IMR-90 (cell line): ENCODE measurements at regions of chr12 and their contacts with region 1.

Region 1: GRCh38 chr12:10673660-10674384 is at the start of gene STYK1:
- DNase-seq: peak; percentile 8
- ATAC-seq: peak; percentile 90
- H3K4me3 ChIP-seq: peak within 1 kb of the TSS; percentile 73
- H3K27ac ChIP-seq: no peak within 1 kb of the TSS
- H3K4me1 ChIP-seq: no peaks in the 10 kb centered on the region
- H3K27me3 ChIP-seq: peaks cover 10% of the 10 kb centered on the region
- CTCF ChIP-seq: peak; percentile 85
- POLR2A ChIP-seq: 0 out of 2 replicates have a peak, but pooled peaks have one; percentile 22
- RAD21 ChIP-seq: peak; percentile 84
- total RNA-seq, gene STYK1: 0.72 and 1.1 TPM in 2 replicates

Region 2: GRCh38 chr12:10331642-10332239 is 342.1 kb before region 1 on chr12:
- CTCF ChIA-PET with region 1: interaction called, 3 read pairs
- POLR2A ChIA-PET with region 1: no interaction called
- dilution Hi-C with region 1: no loop called
- in situ Hi-C with region 1: no loop called
- intact Hi-C with region 1: loop called (anchors 2 kb)
- DNase-seq: peak; percentile 62
- ATAC-seq: peak; percentile 94
- H3K4me3 ChIP-seq: no peak overlapping the region
- H3K27ac ChIP-seq: no peak overlapping the region
- H3K4me1 ChIP-seq: no peaks in the 10 kb centered on the region
- H3K27me3 ChIP-seq: peaks cover 4% of the 10 kb centered on the region
- CTCF ChIP-seq: peak; percentile 90
- POLR2A ChIP-seq: no peak
- RAD21 ChIP-seq: peak; percentile 87

Region 3: DNA sequence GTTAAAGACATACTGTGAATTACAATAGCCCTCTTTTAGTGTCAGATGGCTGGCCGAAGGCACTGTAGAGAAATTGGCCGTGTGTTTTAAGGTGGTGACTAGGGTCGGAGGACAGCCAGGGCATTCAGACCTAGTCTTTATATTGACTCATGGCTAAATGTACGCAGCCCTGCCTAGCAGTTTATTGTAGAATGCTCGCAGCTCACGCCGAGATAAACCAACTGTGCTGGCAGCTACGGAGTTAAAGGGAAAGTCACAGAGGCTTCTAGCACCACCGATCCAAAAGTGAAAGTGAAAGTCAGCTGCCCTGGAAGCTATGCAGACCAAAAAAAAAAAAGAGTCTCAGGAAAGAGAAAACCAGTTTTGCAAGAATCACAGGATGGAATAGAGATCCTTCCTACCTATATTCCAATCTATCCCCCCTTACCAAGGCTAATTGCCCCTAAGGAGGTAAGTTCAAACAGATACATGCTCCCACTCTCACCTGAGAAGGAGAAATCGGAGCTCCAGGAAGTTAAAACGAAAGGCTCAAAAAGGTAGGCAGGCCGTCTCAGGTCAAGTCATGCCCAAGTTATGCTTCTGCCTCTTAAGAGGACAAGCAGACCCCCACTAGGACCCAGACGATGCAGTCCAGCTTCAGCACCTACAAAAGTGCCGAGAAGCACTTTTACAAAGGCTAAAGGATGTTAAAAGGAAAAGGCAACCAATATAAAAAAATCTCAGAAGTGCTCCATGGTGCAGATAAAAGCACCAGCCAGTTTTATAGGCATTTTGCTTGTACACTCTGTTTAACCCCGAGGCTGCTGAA is 308.8 kb before region 1 on chr12:
- CTCF ChIA-PET with region 1: no interaction called
- POLR2A ChIA-PET with region 1: no interaction called
- dilution Hi-C with region 1: no loop called
- in situ Hi-C with region 1: no loop called
- intact Hi-C with region 1: loop called (anchors 2 kb)
- DNase-seq: peak; percentile 84
- ATAC-seq: peak; percentile 58
- H3K4me3 ChIP-seq: peak overlapping the region; percentile 54
- H3K27ac ChIP-seq: peak overlapping the region; percentile 92
- H3K4me1 ChIP-seq: peaks cover 22% of the 10 kb centered on the region
- H3K27me3 ChIP-seq: no peaks in the 10 kb centered on the region
- CTCF ChIP-seq: no peak
- POLR2A ChIP-seq: no peak
- RAD21 ChIP-seq: no peak; the same call in 1 of the 2 replicates

Region 4: DNA sequence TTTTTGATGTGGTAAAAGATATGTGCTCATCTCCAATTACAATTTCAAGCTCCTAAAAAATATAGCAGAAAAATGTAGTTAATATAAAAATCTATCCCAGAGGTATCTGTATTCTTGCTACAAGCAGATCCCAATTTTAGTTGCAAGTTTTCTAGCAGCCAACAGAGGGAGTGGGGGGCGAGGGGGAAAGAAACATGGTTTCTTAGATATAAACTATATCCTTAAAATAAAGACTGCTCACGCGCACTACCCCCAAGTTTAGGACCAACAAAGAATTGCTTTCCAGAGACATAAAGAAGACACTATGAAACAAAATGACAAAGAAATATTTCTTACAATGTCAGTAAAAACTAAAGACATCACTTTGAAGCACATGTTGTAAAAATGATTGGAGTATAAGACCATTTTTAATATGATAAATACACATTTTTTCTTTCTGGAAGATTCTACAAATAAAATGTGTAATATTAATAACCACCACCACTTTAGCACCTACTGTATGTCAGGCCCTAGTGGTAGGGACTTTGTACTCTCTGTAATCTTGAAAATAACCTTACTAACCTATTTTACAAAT is 65.8 kb before region 1 on chr12:
- CTCF ChIA-PET with region 1: no interaction called
- POLR2A ChIA-PET with region 1: no interaction called
- dilution Hi-C with region 1: no loop called
- in situ Hi-C with region 1: no loop called
- intact Hi-C with region 1: loop called (anchors 2 kb)
- DNase-seq: peak; percentile 15
- ATAC-seq: no peak
- H3K4me3 ChIP-seq: no peak overlapping the region
- H3K27ac ChIP-seq: no peak overlapping the region
- H3K4me1 ChIP-seq: peaks cover 5% of the 10 kb centered on the region
- H3K27me3 ChIP-seq: no peaks in the 10 kb centered on the region
- CTCF ChIP-seq: peak; percentile 37; the same call in 1 of the 2 replicates
- POLR2A ChIP-seq: no peak
- RAD21 ChIP-seq: peak; percentile 42